ENCODE measurements at regions of chr1 and their contacts with region 1.

Region 1: GRCh38 chr1:236786453-236786852 is 8.6 kb upstream of the MTR start:
- DNase-seq: no peak

Region 2: GRCh38 chr1:236239092-236239585 is 547.3 kb before region 1 on chr1:
- intact Hi-C with region 1: no loop called
- DNase-seq: no peak

Region 3: DNA sequence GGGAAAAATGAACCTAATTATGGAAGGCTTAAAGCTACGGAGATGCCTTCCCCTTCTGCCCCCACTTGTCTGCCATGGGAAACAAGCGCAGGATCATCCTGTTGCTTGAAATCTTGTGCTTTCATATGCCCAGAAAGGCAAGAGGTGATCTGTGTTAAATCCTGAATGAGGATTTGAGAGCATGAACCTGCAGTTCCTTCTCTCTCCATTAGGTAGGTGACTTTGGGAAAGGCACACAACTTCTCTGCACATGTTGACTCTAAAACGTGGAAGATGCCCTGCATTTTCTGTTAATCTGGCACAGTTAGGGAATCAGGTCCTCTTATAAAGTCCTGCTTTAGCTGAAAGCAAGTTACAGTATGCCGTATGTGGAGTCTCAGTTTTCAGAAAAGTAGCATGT is 38.0 kb before region 1 on chr1:
- intact Hi-C with region 1: no loop called
- DNase-seq: no peak

Region 4: GRCh38 chr1:236966636-236967035 is 180.2 kb after region 1 on chr1:
- intact Hi-C with region 1: loop called (anchors 10 kb)
- DNase-seq: no peak